CD4-positive, alpha-beta T cell (primary cell): ENCODE measurements at regions of chr22 and their contacts with region 1.

Region 1: GRCh38 chr22:41666661-41667258 is 21.9 kb downstream of the SNU13 start:
- DNase-seq: peak; percentile 84 to 97 (median 93)
- ATAC-seq: peak; percentile 92
- H3K4me3 ChIP-seq: peak overlapping the region; percentile 58
- H3K4me3 Mint-ChIP-seq: peak overlapping the region; percentile 90
- H3K27ac ChIP-seq: peak overlapping the region; percentile 77 to 85
- H3K27ac Mint-ChIP-seq: peak overlapping the region; percentile 94
- H3K4me1 ChIP-seq: peaks cover 17% of the 10 kb centered on the region
- H3K4me1 Mint-ChIP-seq: peaks cover 13% of the 10 kb centered on the region
- H3K27me3 ChIP-seq: no peaks in the 10 kb centered on the region
- H3K27me3 Mint-ChIP-seq: no peaks in the 10 kb centered on the region
- CTCF ChIP-seq: peak; percentile 97

Region 2: DNA sequence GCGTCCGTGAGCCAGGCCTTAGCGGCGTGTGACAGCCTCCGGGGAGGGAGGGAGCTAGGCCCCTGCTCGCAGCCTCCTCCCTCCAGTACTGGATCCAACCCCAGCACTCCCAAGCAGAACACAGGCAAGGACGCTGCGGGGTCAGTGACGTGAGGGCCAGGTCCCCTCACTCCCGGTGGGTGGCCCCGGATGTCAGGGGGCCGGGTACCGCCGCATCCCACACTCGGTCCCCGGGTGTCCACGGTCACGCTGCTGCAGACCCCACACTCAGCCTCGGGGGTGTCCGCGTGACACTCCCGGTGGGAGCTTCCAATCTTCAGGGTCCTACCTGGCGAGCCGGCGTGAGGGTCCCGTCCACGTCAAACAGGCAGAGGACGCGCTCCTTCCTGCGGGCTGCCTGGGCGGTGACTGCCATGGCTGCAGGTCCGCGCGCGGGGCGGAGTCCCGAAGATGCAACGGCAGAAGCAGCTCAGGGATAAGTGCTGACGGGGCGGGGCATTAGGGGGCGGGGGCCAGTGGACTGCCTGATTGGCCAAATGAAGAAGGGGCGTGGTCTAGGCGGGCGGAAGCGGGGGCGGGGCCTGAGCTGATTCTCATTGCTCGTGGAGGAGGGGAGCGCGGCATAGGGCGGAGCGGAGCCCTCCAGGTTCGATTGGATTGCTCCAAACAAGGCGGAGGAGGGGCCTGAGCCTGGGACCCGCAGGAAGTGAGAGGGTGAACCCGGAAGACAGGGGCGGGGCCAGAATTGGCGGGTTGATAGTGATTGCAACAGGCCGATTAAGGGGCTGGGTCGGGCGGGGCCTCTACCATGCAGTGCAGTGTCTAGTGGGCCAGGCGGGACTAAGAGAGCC is 77.1 kb before region 1 on chr22 and contains the start of gene PMM1:
- CTCF ChIA-PET with region 1: interaction called, 12 read pairs
- POLR2A ChIA-PET with region 1: interaction called, 6 read pairs
- intact Hi-C with region 1: no loop called
- DNase-seq: peak; percentile 100
- ATAC-seq: peak; percentile 97
- H3K4me3 ChIP-seq: peak within 1 kb of the TSS; percentile 98
- H3K4me3 Mint-ChIP-seq: peak within 1 kb of the TSS; percentile 82
- H3K27ac ChIP-seq: peak within 1 kb of the TSS; percentile 29 to 64
- H3K27ac Mint-ChIP-seq: peak within 1 kb of the TSS; percentile 47
- H3K4me1 ChIP-seq: peaks cover 21% of the 10 kb centered on the region
- H3K4me1 Mint-ChIP-seq: peaks cover 17% of the 10 kb centered on the region
- H3K27me3 ChIP-seq: no peaks in the 10 kb centered on the region
- H3K27me3 Mint-ChIP-seq: no peaks in the 10 kb centered on the region
- CTCF ChIP-seq: no peak
- total RNA-seq, gene PMM1: 24.8 to 25.5 TPM

Region 3: GRCh38 chr22:41682033-41682807 is 15.5 kb after region 1 on chr22:
- CTCF ChIA-PET with region 1: interaction called, 22 read pairs
- POLR2A ChIA-PET with region 1: interaction called, 52 read pairs
- intact Hi-C with region 1: no loop called
- DNase-seq: peak; percentile 72 to 93 (median 80)
- ATAC-seq: peak; percentile 83
- H3K4me3 ChIP-seq: peak overlapping the region; percentile 75
- H3K4me3 Mint-ChIP-seq: peak overlapping the region; percentile 97
- H3K27ac ChIP-seq: peak overlapping the region; percentile 86 to 95
- H3K27ac Mint-ChIP-seq: peak overlapping the region; percentile 98
- H3K4me1 ChIP-seq: peaks cover 44% of the 10 kb centered on the region
- H3K4me1 Mint-ChIP-seq: peaks cover 52% of the 10 kb centered on the region
- H3K27me3 ChIP-seq: no peaks in the 10 kb centered on the region
- H3K27me3 Mint-ChIP-seq: no peaks in the 10 kb centered on the region
- CTCF ChIP-seq: no peak

Region 4: DNA sequence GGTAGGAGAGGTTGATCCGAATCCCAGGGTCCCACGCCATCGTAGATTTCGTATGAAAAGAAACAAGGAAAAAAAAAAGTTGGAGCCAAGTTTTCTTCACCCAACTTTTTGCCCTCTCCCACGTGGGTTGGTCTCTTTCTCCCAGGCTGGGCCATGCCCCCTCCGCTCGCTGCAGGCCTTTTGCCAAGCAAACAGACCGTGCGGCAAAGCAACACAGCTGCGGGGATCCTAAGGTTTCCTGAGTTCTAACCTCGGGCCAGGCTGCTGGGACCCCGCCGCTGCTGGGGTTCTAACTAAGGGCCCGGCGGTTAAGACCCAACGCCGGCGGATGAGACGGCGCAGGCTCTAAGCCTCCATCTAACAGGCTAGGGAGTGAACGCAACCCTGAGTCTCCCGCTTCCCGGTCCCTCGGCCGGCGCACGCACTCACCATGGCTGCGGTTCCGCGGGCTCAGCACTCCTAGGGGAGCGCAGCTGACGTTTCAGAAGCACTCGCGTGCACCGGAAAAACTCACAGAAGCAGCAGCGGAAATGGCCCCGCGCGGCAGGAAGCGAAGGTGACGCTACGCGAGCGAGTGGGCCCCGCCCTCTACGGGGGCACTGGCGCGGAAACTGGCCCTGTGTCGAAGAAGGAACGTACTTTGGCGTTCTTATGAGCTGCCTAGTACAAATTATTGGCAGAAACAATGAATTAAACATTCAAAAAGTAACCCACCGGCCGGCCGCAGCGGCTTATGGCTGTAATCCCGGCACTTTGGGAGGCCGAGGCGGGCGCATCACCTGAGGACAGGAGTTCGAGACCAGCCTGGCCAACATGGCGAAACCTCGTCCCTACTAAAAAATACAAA is 21.8 kb after region 1 on chr22 and contains the start of gene SNU13:
- CTCF ChIA-PET with region 1: interaction called, 22 read pairs
- POLR2A ChIA-PET with region 1: interaction called, 52 read pairs
- intact Hi-C with region 1: loop called (anchors 1 kb)
- DNase-seq: peak; percentile 87 to 97 (median 90)
- ATAC-seq: peak; percentile 92
- H3K4me3 ChIP-seq: peak within 1 kb of the TSS; percentile 91
- H3K4me3 Mint-ChIP-seq: peak within 1 kb of the TSS; percentile 96
- H3K27ac ChIP-seq: peak within 1 kb of the TSS; percentile 95 to 98
- H3K27ac Mint-ChIP-seq: peak within 1 kb of the TSS; percentile 99
- H3K4me1 ChIP-seq: peaks cover 39% of the 10 kb centered on the region
- H3K4me1 Mint-ChIP-seq: peaks cover 45% of the 10 kb centered on the region
- H3K27me3 ChIP-seq: no peaks in the 10 kb centered on the region
- H3K27me3 Mint-ChIP-seq: no peaks in the 10 kb centered on the region
- CTCF ChIP-seq: no peak
- total RNA-seq, gene SNU13: 134 to 140 TPM

Region 5: DNA sequence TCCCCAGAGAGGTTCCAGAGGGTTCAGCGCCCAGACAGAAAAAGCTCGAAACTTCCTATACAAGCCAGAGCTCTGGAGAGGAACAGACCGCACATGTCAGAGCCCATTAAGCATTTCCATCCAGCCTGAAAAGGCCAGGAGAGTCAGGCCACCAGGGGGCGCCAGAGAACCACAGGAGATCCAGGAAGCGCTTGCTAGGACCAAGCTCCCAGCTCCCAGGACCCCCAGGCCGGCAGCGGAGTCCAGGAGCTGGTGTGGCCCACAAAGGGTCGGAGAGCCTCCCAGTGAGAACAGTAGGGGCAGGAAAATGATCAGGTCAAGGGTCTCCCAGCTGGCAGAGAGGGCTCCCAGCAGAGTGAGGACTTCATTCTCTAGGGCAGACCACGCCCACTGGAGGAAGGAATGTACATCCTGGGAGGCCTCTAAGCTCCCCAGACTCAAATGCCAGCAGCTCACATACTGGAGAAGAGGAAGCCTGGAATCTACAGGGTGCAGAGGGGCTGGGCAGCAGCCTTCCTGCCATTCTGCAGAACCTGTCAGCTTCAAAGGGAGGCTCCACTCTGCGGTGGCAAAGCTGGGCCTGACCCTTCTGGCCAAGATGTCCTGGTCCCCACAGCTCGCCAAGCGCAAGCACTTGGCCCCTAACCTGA is 30.5 kb after region 1 on chr22:
- CTCF ChIA-PET with region 1: interaction called, 14 read pairs
- POLR2A ChIA-PET with region 1: interaction called, 15 read pairs
- intact Hi-C with region 1: no loop called
- DNase-seq: peak; percentile 84 to 98 (median 92)
- ATAC-seq: peak; percentile 78
- H3K4me3 ChIP-seq: peak overlapping the region; percentile 24
- H3K4me3 Mint-ChIP-seq: peak overlapping the region; percentile 59
- H3K27ac ChIP-seq: no peak overlapping the region
- H3K27ac Mint-ChIP-seq: no peak overlapping the region
- H3K4me1 ChIP-seq: peaks cover 24% of the 10 kb centered on the region
- H3K4me1 Mint-ChIP-seq: peaks cover 12% of the 10 kb centered on the region
- H3K27me3 ChIP-seq: no peaks in the 10 kb centered on the region
- H3K27me3 Mint-ChIP-seq: no peaks in the 10 kb centered on the region
- CTCF ChIP-seq: peak; percentile 98